Activated B cell treated with CpG ODN at 0.5 μM for 24 hours (primary cell): ENCODE measurements at regions of chr12 and their contacts with region 1.

Region 1: DNA sequence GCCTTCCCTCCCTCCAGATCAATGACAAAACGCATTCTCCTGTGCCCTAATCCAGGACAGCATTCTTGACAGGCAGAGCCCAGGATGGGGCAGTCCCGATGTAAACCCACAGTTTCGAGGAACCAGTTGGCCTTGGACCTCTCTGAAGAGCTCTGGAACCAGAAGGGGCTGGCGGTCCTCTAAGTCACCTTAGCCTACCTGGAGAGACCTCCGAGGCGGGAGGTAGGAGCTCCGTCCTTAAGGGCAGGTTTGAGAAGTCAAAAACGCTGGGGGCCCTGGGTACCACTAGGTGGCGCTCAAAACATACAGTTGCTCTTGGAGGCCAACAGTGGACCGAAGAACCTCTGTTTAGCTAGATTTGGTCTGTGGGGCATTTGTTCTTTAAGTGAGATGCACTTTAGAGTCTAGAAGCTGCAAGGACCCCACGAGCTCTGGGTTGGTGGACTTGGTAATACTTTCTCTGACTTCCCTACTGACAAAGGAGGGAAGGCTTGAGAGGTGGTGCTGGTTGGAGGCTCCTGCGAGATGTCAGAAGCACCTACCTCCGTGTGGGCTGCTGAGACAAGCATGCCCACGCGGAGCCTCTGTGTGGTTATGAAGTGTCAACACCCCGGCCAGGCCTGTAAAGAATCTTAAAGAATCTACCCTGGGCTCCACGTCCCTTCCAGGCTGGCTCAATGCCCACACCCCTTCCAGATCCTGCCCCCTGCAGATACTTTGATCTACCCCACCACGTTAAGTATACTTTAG is 74.8 kb upstream of the CHST11 start:
- DNase-seq: peak; percentile 68
- ATAC-seq: peak; percentile 88
- H3K4me3 Mint-ChIP-seq: no peak overlapping the region
- H3K27ac Mint-ChIP-seq: no peak overlapping the region
- H3K4me1 Mint-ChIP-seq: peaks cover 9% of the 10 kb centered on the region
- H3K27me3 Mint-ChIP-seq: peaks cover 4% of the 10 kb centered on the region
- CTCF ChIP-seq: peak; percentile 29

Region 2: DNA sequence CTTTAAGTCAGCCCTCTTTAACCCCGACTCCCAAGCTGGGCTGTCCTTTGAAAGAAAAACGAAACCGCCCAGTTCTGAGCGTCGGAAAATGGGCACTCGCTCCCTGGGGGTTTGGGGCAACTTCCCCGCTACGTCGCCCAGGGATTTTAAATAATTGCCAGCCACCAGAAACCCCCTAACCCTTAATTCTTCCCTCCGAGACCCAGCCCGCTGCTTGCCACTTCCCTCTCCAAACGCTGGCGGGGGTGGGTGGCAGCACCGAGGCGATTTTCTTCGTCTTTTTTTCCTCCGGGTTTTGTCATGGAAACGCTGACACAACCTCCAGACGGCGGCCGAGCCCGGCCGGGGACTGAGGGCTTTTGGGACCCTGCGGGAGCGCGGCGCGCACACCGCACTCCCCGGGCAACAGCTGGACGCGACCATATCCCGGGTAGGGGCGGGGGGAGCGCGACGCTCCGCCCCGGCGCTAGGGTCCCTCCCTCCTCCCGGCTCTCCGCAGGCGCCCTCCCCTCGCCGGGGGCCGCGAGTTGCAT is 74.6 kb after region 1 on chr12 and contains the start of gene CHST11:
- CTCF ChIA-PET with region 1: interaction called, 30 read pairs
- POLR2A ChIA-PET with region 1: interaction called, 5 read pairs
- intact Hi-C with region 1: loop called (anchors 1 kb)
- DNase-seq: peak; percentile 71
- ATAC-seq: peak; percentile 70
- H3K4me3 Mint-ChIP-seq: peak within 1 kb of the TSS; percentile 99
- H3K27ac Mint-ChIP-seq: peak within 1 kb of the TSS; percentile 93
- H3K4me1 Mint-ChIP-seq: peaks cover 49% of the 10 kb centered on the region
- H3K27me3 Mint-ChIP-seq: no peaks in the 10 kb centered on the region
- CTCF ChIP-seq: no peak
- total RNA-seq, gene CHST11: 40.1 and 40.6 TPM in 2 replicates

Region 3: DNA sequence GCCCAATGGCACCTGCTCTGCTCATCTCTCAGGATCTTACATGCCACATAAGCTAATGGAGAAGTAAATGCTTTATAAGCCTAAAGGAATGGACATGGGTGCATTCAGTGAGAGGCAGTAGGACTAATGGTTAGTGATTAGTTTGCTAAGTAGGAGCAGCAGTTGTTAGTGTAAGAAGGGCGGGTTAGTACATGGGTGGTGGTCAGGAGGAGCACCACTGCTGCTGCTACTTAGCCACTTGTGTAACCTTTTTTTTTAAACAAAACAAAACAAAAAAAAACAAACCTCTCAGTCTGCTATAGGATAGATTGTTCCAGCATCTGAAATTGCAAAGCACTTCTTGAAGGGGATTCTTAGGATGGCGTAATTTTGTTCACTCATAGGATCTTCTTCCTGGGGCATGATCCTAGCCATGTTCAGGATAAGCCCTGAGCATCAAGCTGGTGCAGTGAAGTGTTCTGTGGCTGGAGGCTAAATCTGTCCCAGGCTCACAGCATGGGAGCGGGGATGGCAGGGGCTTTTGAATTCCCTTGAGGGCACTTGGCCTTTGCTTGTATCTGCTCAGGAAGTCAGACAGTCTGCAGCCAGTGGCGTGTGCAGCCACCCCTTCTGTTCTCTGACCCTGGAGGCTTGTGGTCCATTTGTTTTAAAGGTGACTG is 138.5 kb after region 1 on chr12:
- CTCF ChIA-PET with region 1: interaction called, 14 read pairs
- POLR2A ChIA-PET with region 1: interaction called, 4 read pairs
- intact Hi-C with region 1: loop called (anchors 10 kb)
- DNase-seq: peak; percentile 53
- ATAC-seq: peak; percentile 83
- H3K4me3 Mint-ChIP-seq: peak overlapping the region; percentile 75
- H3K27ac Mint-ChIP-seq: peak overlapping the region; percentile 79
- H3K4me1 Mint-ChIP-seq: peaks cover 97% of the 10 kb centered on the region
- H3K27me3 Mint-ChIP-seq: no peaks in the 10 kb centered on the region
- CTCF ChIP-seq: no peak

Region 4: GRCh38 chr12:104671407-104672098 is 289.6 kb after region 1 on chr12:
- CTCF ChIA-PET with region 1: interaction called, 6 read pairs
- POLR2A ChIA-PET with region 1: interaction called, 3 read pairs
- intact Hi-C with region 1: loop called (anchors 2 kb)
- DNase-seq: peak; percentile 53
- ATAC-seq: peak; percentile 82
- H3K4me3 Mint-ChIP-seq: peak overlapping the region; percentile 71
- H3K27ac Mint-ChIP-seq: peak overlapping the region; percentile 92
- H3K4me1 Mint-ChIP-seq: peaks cover 80% of the 10 kb centered on the region
- H3K27me3 Mint-ChIP-seq: no peaks in the 10 kb centered on the region
- CTCF ChIP-seq: no peak

Region 5: DNA sequence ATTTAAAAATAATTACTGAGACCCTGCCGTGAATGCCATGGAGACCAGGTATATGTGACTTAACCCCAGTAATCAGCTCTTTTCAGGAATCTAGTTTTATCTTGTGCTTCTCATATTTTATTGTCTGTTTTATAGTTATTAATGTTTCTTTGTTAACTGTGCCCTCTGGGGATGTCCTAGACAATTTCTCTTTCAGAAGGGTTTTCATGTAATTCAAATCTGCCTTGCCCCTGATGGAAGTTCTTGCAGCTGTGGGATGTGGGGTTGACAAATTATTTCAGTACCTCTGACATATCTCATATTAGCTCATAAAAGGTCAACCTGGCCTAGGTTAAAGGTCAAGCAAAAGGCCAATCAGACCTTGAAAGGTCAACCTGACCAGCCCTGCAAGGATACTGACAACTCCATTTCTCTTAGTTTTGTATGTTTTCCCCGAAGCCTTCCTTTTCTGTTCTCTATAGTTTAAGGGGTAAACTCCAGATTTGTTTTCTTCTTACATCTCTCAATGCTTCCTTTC is 393.9 kb after region 1 on chr12:
- CTCF ChIA-PET with region 1: no interaction called
- POLR2A ChIA-PET with region 1: no interaction called
- intact Hi-C with region 1: no loop called
- DNase-seq: no peak
- ATAC-seq: no peak
- H3K4me3 Mint-ChIP-seq: no peak overlapping the region
- H3K27ac Mint-ChIP-seq: no peak overlapping the region
- H3K4me1 Mint-ChIP-seq: no peaks in the 10 kb centered on the region
- H3K27me3 Mint-ChIP-seq: peaks cover 16% of the 10 kb centered on the region
- CTCF ChIP-seq: no peak

Region 6: GRCh38 chr12:104790296-104791125 is 408.6 kb after region 1 on chr12:
- CTCF ChIA-PET with region 1: interaction called, 13 read pairs
- POLR2A ChIA-PET with region 1: no interaction called
- intact Hi-C with region 1: loop called (anchors 1 kb)
- DNase-seq: peak; percentile 40
- ATAC-seq: peak; percentile 76
- H3K4me3 Mint-ChIP-seq: peak overlapping the region; percentile 76
- H3K27ac Mint-ChIP-seq: no peak overlapping the region
- H3K4me1 Mint-ChIP-seq: peaks cover 7% of the 10 kb centered on the region
- H3K27me3 Mint-ChIP-seq: no peaks in the 10 kb centered on the region
- CTCF ChIP-seq: peak; percentile 21

Region 7: DNA sequence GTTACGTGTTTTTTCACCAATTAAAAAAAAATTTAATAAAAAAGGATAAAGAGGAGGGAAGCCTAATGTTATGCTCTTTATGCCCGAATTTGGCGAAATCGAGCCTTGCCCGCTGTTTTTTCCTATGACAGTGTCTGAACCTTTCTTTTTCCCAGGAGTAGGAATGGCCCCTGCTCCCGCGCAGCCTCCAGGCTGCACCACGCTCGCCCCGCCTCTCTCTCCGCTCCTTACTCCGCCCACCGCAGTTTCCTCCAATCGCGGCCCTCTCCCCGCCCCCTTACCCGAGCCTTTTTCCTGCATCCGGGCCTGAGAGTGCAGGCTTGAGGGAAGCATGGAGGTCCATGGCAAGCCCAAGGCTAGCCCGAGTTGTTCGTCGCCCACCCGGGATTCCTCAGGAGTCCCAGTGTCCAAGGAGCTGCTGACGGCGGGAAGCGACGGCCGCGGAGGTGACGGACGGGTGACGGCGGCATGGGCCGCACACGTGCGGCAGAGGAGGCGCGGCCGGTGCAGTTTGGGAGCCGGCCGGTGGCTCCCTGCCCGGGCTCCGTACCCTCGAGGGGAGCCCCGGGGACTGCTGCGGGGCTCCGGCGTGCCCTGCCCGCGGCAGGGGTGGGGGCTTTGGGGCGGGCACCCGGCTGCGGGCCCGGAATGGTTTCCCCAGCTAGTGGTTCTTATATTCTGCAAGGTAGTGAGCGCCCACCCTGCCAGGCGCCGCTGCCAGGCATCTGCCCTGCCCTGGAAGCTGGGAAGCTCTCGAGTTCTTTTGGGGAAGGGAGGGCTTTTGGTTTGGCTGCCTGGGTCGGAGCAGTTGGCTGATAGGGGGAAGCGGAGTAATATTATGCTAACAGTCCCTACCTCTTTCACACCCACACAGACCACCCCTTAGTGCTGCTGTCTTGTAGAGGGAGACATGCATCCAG is 604.4 kb after region 1 on chr12 and contains the start of gene NOPCHAP1:
- CTCF ChIA-PET with region 1: interaction called, 4 read pairs
- POLR2A ChIA-PET with region 1: no interaction called
- intact Hi-C with region 1: loop called (anchors 5 kb)
- DNase-seq: peak; percentile 83
- ATAC-seq: peak; percentile 98
- H3K4me3 Mint-ChIP-seq: peak within 1 kb of the TSS; percentile 91
- H3K27ac Mint-ChIP-seq: peak within 1 kb of the TSS; percentile 70
- H3K4me1 Mint-ChIP-seq: peaks cover 24% of the 10 kb centered on the region
- H3K27me3 Mint-ChIP-seq: no peaks in the 10 kb centered on the region
- CTCF ChIP-seq: no peak
- total RNA-seq, gene NOPCHAP1: 26.4 and 30.0 TPM in 2 replicates